Activated CD4-positive, alpha-beta T cell treated with anti-CD3 and anti-CD28 coated beads for 36 hours (primary cell): ENCODE measurements at regions of chr7 and their contacts with region 1.

Region 1: DNA sequence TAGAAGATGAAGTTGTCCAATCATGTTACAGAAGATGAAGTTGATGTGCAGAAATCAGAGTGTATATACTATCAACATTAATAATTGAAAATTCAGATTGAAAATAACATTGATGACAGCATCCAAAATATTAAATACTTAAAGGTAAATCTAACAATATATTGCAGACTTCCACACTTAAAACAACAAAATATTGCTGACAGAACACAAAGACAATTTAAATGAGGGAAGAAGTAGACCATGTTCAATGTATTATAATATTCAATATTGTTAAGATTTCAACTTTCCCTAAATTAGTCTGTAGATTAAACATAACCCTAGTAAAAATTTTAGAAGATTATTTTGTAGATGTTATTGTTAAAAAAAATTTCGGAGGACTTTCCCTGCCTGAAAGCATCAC is 151.9 kb downstream of the PON1 start:
- DNase-seq: no peak
- ATAC-seq: no peak
- H3K4me3 Mint-ChIP-seq: no peak overlapping the region
- H3K27ac Mint-ChIP-seq: no peak overlapping the region
- H3K4me1 Mint-ChIP-seq: no peaks in the 10 kb centered on the region
- H3K27me3 Mint-ChIP-seq: no peaks in the 10 kb centered on the region

Region 2: GRCh38 chr7:94856643-94857042 is 315.8 kb before region 1 on chr7:
- CTCF ChIA-PET with region 1: no interaction called
- POLR2A ChIA-PET with region 1: no interaction called
- intact Hi-C with region 1: no loop called
- DNase-seq: no peak
- ATAC-seq: no peak
- H3K4me3 Mint-ChIP-seq: no peak overlapping the region
- H3K27ac Mint-ChIP-seq: no peak overlapping the region
- H3K4me1 Mint-ChIP-seq: no peaks in the 10 kb centered on the region
- H3K27me3 Mint-ChIP-seq: peaks cover 2% of the 10 kb centered on the region

Region 3: DNA sequence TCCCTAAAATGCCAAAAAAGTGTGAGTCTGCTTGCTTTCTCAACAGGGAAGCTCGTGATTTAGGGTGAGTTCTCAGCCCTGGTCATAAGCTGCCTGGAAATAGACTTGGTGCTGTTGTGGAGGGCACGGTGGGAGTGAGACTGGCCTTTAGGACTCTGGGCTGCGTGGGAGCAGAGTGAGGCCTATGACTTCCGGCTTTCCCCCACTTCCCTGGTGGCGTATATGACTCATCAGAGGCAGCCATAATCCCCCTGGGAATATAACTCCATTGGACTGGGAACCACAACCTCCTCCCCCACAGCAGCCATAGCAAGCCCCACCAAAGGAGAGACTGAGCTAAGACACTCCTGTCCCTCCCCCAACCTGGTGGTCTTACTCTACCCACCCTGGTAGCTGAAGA is 56.9 kb after region 1 on chr7:
- CTCF ChIA-PET with region 1: no interaction called
- POLR2A ChIA-PET with region 1: no interaction called
- intact Hi-C with region 1: loop called in 1 of 2 experiments (anchors 5 kb)
- DNase-seq: no peak
- ATAC-seq: no peak
- H3K4me3 Mint-ChIP-seq: no peak overlapping the region
- H3K27ac Mint-ChIP-seq: no peak overlapping the region
- H3K4me1 Mint-ChIP-seq: no peaks in the 10 kb centered on the region
- H3K27me3 Mint-ChIP-seq: peaks cover 2% of the 10 kb centered on the region

Region 4: GRCh38 chr7:95276114-95276513 is 103.7 kb after region 1 on chr7:
- CTCF ChIA-PET with region 1: no interaction called
- POLR2A ChIA-PET with region 1: no interaction called
- intact Hi-C with region 1: no loop called
- DNase-seq: no peak
- ATAC-seq: no peak
- H3K4me3 Mint-ChIP-seq: no peak overlapping the region
- H3K27ac Mint-ChIP-seq: no peak overlapping the region
- H3K4me1 Mint-ChIP-seq: no peaks in the 10 kb centered on the region
- H3K27me3 Mint-ChIP-seq: peaks cover 7% of the 10 kb centered on the region